CD8-positive, alpha-beta T cell (primary cell): ENCODE measurements at regions of chr3 and their contacts with region 1.

Region 1: GRCh38 chr3:46368569-46368968 is 2.2 kb upstream of the CCR5 start:
- DNase-seq: peak; percentile 35 to 89 (median 65)
- ATAC-seq: peak; percentile 72
- H3K4me3 ChIP-seq: no peak overlapping the region
- H3K4me3 Mint-ChIP-seq: peak overlapping the region; percentile 43
- H3K27ac ChIP-seq: peak overlapping the region in 1 of 2 experiments; percentile 82
- H3K27ac Mint-ChIP-seq: peak overlapping the region; percentile 81
- H3K4me1 ChIP-seq: peaks cover 23% of the 10 kb centered on the region
- H3K4me1 Mint-ChIP-seq: peaks cover 52% of the 10 kb centered on the region
- H3K27me3 ChIP-seq: no peaks in the 10 kb centered on the region
- H3K27me3 Mint-ChIP-seq: no peaks in the 10 kb centered on the region
- CTCF ChIP-seq: peak; percentile 53

Region 2: GRCh38 chr3:46098319-46098761 is 270.2 kb before region 1 on chr3:
- CTCF ChIA-PET with region 1: interaction called, 24 read pairs
- POLR2A ChIA-PET with region 1: interaction called, 3 read pairs
- intact Hi-C with region 1: loop called in 1 of 2 experiments (anchors 1 kb)
- DNase-seq: peak in 8 of 9 experiments; percentile 19 to 70 (median 43)
- ATAC-seq: peak; percentile 75
- H3K4me3 ChIP-seq: no peak overlapping the region
- H3K4me3 Mint-ChIP-seq: peak overlapping the region; percentile 63
- H3K27ac ChIP-seq: peak overlapping the region; percentile 3 to 89
- H3K27ac Mint-ChIP-seq: peak overlapping the region; percentile 72
- H3K4me1 ChIP-seq: peaks cover 27% of the 10 kb centered on the region
- H3K4me1 Mint-ChIP-seq: peaks cover 48% of the 10 kb centered on the region
- H3K27me3 ChIP-seq: no peaks in the 10 kb centered on the region
- H3K27me3 Mint-ChIP-seq: no peaks in the 10 kb centered on the region
- CTCF ChIP-seq: no peak

Region 3: GRCh38 chr3:46208167-46208704 is 160.3 kb before region 1 on chr3 and contains the start of gene CCR1:
- CTCF ChIA-PET with region 1: interaction called, 15 read pairs
- POLR2A ChIA-PET with region 1: interaction called, 3 read pairs
- intact Hi-C with region 1: no loop called
- DNase-seq: peak in 4 of 9 experiments; percentile 26 to 77 (median 50)
- ATAC-seq: peak; percentile 45
- H3K4me3 ChIP-seq: peak within 1 kb of the TSS in 1 of 2 experiments; percentile 30
- H3K4me3 Mint-ChIP-seq: peak within 1 kb of the TSS; percentile 62
- H3K27ac ChIP-seq: peak within 1 kb of the TSS in 1 of 2 experiments; percentile 45
- H3K27ac Mint-ChIP-seq: peak within 1 kb of the TSS; percentile 80
- H3K4me1 ChIP-seq: peaks cover 21% of the 10 kb centered on the region
- H3K4me1 Mint-ChIP-seq: peaks cover 32% of the 10 kb centered on the region
- H3K27me3 ChIP-seq: no peaks in the 10 kb centered on the region
- H3K27me3 Mint-ChIP-seq: no peaks in the 10 kb centered on the region
- CTCF ChIP-seq: no peak
- total RNA-seq, gene CCR1: 0.86 to 1.2 TPM

Region 4: GRCh38 chr3:46266598-46266997 is 102.0 kb before region 1 on chr3:
- CTCF ChIA-PET with region 1: interaction called, 17 read pairs
- POLR2A ChIA-PET with region 1: interaction called, 3 read pairs
- intact Hi-C with region 1: no loop called
- DNase-seq: no peak
- ATAC-seq: no peak
- H3K4me3 ChIP-seq: no peak overlapping the region
- H3K4me3 Mint-ChIP-seq: no peak overlapping the region
- H3K27ac ChIP-seq: no peak overlapping the region
- H3K27ac Mint-ChIP-seq: no peak overlapping the region
- H3K4me1 ChIP-seq: peaks cover 4% of the 10 kb centered on the region
- H3K4me1 Mint-ChIP-seq: peaks cover 18% of the 10 kb centered on the region
- H3K27me3 ChIP-seq: no peaks in the 10 kb centered on the region
- H3K27me3 Mint-ChIP-seq: peaks cover 3% of the 10 kb centered on the region
- CTCF ChIP-seq: no peak

Region 5: DNA sequence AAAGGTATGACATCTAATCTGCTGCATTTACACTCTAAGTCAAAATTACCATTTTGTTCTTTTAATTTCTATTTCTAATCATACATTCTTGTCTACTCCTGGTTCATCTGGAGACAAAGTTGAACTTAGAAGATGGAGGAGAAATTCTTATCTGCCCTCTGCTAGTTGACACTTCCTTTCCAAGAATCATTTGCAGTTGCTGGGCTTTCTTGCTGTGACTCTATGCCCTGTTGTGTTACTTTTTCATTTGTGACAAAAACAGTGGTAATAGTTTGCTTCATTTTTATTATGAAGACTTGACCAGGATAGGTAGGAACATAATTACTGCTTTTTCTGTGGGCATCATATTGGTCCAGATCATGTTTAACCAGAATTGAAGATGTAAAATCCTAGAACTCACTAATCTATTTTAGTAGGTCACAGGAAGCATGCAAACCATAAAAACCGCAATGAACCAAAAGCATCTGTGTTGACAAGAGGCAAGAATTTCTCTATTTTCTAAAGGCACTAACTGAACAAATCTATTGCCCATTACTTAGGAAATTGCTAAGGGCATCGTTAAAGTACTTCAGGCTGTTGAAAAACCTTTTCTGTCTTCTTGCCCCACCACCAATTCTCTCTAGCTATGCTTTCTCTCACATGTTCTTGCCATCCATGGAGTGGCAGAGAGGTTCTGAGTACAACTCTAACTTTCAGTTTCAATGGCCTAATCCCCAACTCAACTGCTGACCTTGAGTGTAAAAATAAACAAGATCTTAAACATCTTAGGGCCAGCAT is 18.9 kb before region 1 on chr3:
- CTCF ChIA-PET with region 1: interaction called, 56 read pairs
- POLR2A ChIA-PET with region 1: interaction called, 7 read pairs
- intact Hi-C with region 1: no loop called
- DNase-seq: peak in 2 of 9 experiments; percentile 44 to 65
- ATAC-seq: peak; percentile 45
- H3K4me3 ChIP-seq: peak overlapping the region in 1 of 2 experiments; percentile 11
- H3K4me3 Mint-ChIP-seq: peak overlapping the region; percentile 33
- H3K27ac ChIP-seq: peak overlapping the region in 1 of 2 experiments; percentile 62
- H3K27ac Mint-ChIP-seq: peak overlapping the region; percentile 46
- H3K4me1 ChIP-seq: peaks cover 44% of the 10 kb centered on the region
- H3K4me1 Mint-ChIP-seq: peaks cover 66% of the 10 kb centered on the region
- H3K27me3 ChIP-seq: no peaks in the 10 kb centered on the region
- H3K27me3 Mint-ChIP-seq: no peaks in the 10 kb centered on the region
- CTCF ChIP-seq: no peak